Activated CD8-positive, alpha-beta T cell treated with anti-CD3 and anti-CD28 coated beads, Interleukin-2, amount 10 ng/mL, durations not matched to agents 7 days and 5 days (primary cell): ENCODE measurements at regions of chr2 and their contacts with region 1.

Region 1: DNA sequence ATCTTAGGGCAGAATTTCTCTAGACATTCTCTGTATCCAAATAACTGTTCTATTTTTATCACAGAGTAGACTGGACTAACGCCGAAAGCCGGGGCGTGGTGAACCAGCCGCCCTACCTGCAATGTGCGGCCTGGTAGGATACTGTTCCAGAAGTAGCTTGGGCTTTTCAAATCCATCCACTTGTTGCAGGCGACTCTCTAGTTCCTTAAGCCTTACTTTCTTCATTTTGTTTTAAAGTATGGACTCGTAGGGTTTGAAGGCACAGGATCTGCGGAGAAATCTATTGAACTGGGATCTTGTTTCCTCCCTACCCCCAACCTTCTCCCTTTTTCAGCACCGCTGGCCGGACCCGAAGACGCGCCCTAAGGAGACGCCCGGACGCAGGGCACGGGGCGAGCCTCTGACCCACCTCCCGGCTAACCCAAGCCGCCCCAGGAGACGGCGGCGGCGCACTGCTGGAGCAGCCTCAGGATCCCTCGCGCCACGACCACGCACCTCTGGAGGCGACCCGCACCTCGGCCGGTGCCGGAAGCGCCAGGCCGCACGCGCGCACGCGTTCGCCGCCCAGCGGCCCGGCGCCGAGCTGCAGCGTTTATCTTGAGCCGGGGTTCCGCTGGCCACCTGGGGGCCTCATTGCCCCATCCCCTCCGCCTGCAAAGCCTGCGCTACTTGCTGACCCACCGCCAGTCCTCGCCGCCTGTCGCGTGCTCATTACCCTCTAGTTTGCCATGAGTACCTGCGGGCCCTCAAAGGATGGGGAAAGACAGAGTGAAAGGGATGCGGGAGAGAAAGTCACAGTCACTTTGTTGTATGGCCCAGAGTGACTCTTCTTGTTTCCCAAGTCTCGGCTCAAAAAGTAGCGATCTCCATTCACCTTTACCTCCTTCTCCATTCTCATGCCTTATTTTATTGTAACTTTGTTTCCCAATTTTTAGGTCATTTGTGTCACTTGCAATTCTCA is at the start of gene METTL5:
- DNase-seq: peak; percentile 83
- ATAC-seq: peak; percentile 75
- H3K4me3 Mint-ChIP-seq: peak within 1 kb of the TSS; percentile 93
- H3K27ac Mint-ChIP-seq: peak within 1 kb of the TSS; percentile 87
- H3K4me1 Mint-ChIP-seq: peaks cover 55% of the 10 kb centered on the region
- H3K27me3 Mint-ChIP-seq: no peaks in the 10 kb centered on the region
- total RNA-seq, gene METTL5: 57.3 to 66.0 TPM

Region 2: DNA sequence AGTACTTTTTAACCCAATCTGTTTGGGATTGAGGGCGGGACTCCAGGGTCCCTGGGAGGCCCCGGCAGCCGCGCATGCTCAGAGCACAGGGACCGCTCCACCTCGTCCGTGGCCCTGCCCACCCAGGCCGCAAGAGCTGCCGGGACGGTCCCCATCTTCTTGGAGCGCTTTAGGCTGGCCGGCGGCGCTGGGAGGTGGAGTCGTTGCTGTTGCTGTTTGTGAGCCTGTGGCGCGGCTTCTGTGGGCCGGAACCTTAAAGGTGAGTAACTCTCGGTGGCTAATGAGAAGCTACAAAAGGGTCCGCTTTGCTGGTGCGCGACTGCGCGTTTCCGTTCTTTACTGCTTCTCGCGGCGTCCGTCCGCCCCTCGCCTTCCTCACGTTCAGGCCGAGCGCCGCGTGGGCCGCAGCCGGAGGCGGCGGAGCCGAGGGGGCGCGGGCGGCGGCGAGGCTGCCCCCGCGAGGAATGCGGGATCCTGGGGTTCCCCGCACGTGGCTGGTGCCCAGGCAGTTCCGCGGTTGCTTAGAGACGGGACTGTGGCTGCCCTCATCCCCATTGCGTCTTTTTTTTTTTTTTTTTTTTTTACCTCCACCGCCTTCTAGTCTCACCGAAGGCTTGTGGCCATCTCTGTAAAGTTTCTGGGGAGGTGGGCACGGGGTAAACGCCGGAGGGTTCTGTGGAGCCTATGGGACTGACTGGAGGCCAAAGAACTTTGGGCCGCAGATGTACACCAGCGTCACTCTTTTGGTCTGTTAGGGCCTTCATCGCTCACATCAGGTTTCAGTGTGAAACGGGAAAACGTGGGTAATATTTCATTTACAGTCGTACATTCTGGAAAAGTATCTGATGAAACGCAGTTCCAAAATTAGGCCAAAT is 25.7 kb before region 1 on chr2 and contains the start of gene SSB:
- CTCF ChIA-PET with region 1: interaction called, 13 read pairs
- POLR2A ChIA-PET with region 1: interaction called, 19 read pairs
- DNase-seq: peak; percentile 97
- ATAC-seq: peak; percentile 97
- H3K4me3 Mint-ChIP-seq: peak within 1 kb of the TSS; percentile 80
- H3K27ac Mint-ChIP-seq: peak within 1 kb of the TSS; percentile 83
- H3K4me1 Mint-ChIP-seq: peaks cover 25% of the 10 kb centered on the region
- H3K27me3 Mint-ChIP-seq: peaks cover 3% of the 10 kb centered on the region
- total RNA-seq, gene SSB: 86.0 to 86.9 TPM

Region 3: GRCh38 chr2:169853041-169853668 is 28.5 kb after region 1 on chr2:
- CTCF ChIA-PET with region 1: no interaction called
- POLR2A ChIA-PET with region 1: no interaction called
- DNase-seq: no peak
- ATAC-seq: no peak
- H3K4me3 Mint-ChIP-seq: no peak overlapping the region
- H3K27ac Mint-ChIP-seq: no peak overlapping the region
- H3K4me1 Mint-ChIP-seq: peaks cover 8% of the 10 kb centered on the region
- H3K27me3 Mint-ChIP-seq: no peaks in the 10 kb centered on the region

Region 4: GRCh38 chr2:169877398-169877797 is 52.7 kb after region 1 on chr2:
- CTCF ChIA-PET with region 1: interaction called, 30 read pairs
- POLR2A ChIA-PET with region 1: no interaction called
- DNase-seq: no peak
- ATAC-seq: no peak
- H3K4me3 Mint-ChIP-seq: no peak overlapping the region
- H3K27ac Mint-ChIP-seq: no peak overlapping the region
- H3K4me1 Mint-ChIP-seq: no peaks in the 10 kb centered on the region
- H3K27me3 Mint-ChIP-seq: no peaks in the 10 kb centered on the region